ENCODE measurements at regions of chr12 and their contacts with region 1.

Region 1: GRCh38 chr12:94872971-94873733 is 130.3 kb downstream of the NDUFA12 start:
- ATAC-seq: peak in 6 of 8 experiments; percentile 30 to 92 (median 74)
- H3K4me3 ChIP-seq: peak overlapping the region; percentile 36 to 50 (median 46)
- H3K27ac ChIP-seq: no peak overlapping the region
- H3K4me1 ChIP-seq: peaks cover 0 to 6% of the 10 kb centered on the region in 2 donors

Region 2: GRCh38 chr12:94133964-94134795 is 739.0 kb before region 1 on chr12:
- in situ Hi-C with region 1: no loop called
- ATAC-seq: peak; percentile 44 to 88 (median 60)
- H3K4me3 ChIP-seq: no peak overlapping the region
- H3K27ac ChIP-seq: no peak overlapping the region
- H3K4me1 ChIP-seq: no peaks in the 10 kb centered on the region

Region 3: GRCh38 chr12:94649349-94650142 is 223.6 kb before region 1 on chr12:
- in situ Hi-C with region 1: no loop called
- ATAC-seq: peak; percentile 71 to 83 (median 80)
- H3K4me3 ChIP-seq: peak overlapping the region; percentile 49 to 74 (median 70)
- H3K27ac ChIP-seq: peak overlapping the region in 1 of 2 donors; percentile 21
- H3K4me1 ChIP-seq: peaks cover 0 to 6% of the 10 kb centered on the region in 2 donors

Region 4: DNA sequence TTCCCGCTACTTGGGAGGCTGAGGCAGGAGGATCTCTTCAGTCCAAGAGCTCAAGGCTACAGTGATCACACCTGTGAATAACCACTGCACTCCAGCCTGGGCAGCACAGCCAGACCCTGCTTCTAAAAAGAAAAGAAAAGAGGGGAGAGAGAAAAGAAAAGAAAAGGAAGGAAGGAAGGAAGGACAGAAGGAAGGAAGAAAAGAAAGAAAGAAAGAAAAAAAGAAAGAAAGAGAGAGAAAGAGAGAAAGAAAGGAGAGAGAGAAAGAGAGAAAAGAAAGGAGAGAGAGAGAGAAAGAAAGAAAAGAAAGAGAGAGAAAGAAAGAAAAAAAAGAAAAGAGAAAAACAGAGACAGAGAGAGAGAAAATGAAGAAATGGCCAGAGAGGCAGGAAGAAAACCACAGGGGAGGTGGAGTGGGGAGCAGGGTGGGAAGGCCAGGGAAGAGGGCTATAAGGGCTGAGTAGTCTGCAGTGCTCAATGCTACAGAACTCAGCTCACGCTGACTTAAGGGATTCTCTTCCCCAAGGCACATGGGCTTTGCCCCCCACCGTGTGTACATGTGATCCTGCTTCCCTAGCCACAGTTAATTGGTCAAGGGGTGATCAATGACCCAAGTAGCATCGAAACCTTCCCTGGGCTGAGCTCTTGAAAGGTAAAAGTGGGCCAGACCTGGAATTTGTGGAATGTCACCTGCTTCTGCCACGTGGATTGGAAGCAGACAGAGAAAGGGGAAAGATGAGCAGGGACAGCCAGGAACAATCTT is 132.4 kb before region 1 on chr12:
- in situ Hi-C with region 1: no loop called
- ATAC-seq: no peak
- H3K4me3 ChIP-seq: no peak overlapping the region
- H3K27ac ChIP-seq: no peak overlapping the region
- H3K4me1 ChIP-seq: peaks cover 7 to 24% of the 10 kb centered on the region in 2 donors

Region 5: GRCh38 chr12:94762259-94762942 is 110.8 kb before region 1 on chr12:
- in situ Hi-C with region 1: loop called in 1 of 9 experiments (anchors 25 kb)
- ATAC-seq: no peak
- H3K4me3 ChIP-seq: no peak overlapping the region
- H3K27ac ChIP-seq: no peak overlapping the region
- H3K4me1 ChIP-seq: peaks cover 0 to under 1% of the 10 kb centered on the region in 2 donors

Region 6: DNA sequence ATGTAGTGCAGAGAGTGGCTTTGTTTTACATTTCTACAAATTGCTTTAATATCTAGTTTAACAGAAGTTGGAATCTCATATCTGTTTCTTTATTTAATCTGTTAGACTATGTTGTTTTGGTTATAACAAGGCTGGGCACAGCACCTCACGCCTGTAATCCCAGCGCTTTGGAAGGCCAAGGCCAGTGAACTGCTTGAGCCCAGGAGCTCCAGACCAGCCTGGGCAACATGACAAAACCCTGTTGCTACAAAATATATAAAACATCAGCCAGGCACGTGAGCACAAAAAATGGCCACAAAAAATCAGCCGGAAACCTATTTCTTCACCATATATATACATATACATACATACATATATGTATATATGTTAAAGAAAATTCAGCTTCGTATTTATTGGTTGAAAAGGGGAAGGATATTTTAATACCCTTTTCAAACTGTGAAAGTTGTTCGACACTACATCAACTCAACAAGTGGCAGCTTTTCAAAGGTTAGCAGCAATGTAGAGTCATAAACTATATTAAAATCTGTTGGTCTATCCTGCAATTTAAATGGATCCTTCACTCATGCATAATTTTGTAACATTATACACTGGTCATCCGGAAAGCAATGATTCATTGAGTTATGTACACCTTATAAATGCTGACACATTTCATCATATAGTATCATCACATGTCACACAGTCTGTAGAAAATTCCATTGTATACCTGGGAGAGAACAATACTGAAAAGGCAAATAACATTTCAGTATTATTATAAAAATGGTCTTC is 193.1 kb after region 1 on chr12:
- in situ Hi-C with region 1: no loop called
- ATAC-seq: peak in 3 of 8 experiments; percentile 88 to 97 (median 92)
- H3K4me3 ChIP-seq: no peak overlapping the region
- H3K27ac ChIP-seq: no peak overlapping the region
- H3K4me1 ChIP-seq: no peaks in the 10 kb centered on the region